Transverse colon (tissue), 4 donors: ENCODE measurements at regions of chr20 and their contacts with region 1.

Region 1: GRCh38 chr20:38221119-38221589 is 39.4 kb downstream of the KIAA1755 start:
- DNase-seq: peak; percentile 61
- H3K4me3 ChIP-seq: no peak overlapping the region
- H3K27ac ChIP-seq: no peak overlapping the region
- H3K4me1 ChIP-seq: no peaks in the 10 kb centered on the region
- H3K27me3 ChIP-seq: no peaks in the 10 kb centered on the region
- CTCF ChIP-seq: peak; percentile 79 to 86 (median 85)
- EP300 ChIP-seq: no peak
- POLR2A ChIP-seq: no peak

Region 2: DNA sequence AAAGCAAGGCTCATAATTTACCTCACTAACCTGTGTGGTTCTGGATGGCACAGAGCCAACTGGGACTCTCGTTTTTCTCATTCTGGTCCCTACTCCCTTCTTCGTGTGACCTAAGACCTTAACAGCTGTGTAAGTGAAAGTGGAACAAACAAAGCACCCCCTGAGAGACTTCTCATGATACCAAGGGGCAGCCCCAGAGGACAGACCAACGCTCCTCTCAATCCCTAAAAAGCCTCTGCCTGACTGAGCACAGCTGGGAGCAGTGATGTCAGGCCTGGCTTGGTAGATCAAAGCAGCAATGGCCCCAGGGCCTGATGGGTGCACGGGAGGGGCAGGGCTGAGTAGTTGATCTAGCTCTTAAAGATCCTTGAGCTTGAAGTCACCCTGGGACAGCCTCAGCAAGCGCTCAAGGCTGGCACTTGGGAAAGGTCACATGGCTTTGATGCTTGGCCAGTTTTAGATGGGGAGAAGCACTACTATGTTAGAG is 39.9 kb before region 1 on chr20:
- in situ Hi-C with region 1: no loop called
- intact Hi-C with region 1: no loop called
- DNase-seq: no peak
- H3K4me3 ChIP-seq: no peak overlapping the region
- H3K27ac ChIP-seq: no peak overlapping the region
- H3K4me1 ChIP-seq: no peaks in the 10 kb centered on the region
- H3K27me3 ChIP-seq: peaks cover 15% of the 10 kb centered on the region
- CTCF ChIP-seq: no peak
- EP300 ChIP-seq: no peak
- POLR2A ChIP-seq: no peak

Region 3: DNA sequence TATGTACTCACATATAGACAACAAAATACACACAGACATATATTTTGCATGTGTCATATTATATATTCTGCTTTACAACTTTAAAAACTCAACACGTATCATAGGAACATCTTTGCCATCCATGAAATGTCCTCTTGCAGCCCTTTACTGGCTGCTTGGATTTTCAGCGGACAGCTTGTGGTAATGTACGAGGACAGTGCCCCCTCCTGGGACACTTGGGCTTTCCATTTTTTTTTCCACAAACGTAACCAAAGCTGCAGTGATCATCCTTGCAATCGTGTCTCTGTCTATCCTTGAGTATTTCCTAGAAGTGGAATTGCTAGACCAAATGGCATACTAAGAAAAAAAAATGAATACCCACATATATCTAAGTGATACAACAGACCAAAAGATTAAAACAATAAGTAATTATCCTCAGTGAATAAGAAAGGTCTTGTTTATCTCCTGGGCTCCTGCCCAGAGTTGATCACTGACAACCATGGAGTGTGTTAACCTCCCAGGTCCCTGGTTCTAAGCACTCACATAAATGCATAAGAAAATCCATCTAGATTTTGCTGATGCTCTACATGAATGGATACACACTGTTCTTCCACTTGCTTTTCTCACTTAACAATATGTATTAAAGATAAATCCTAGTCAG is 100.9 kb after region 1 on chr20:
- in situ Hi-C with region 1: loop called in 1 of 4 experiments (anchors 10 kb)
- intact Hi-C with region 1: no loop called
- DNase-seq: no peak
- H3K4me3 ChIP-seq: no peak overlapping the region
- H3K27ac ChIP-seq: no peak overlapping the region
- H3K4me1 ChIP-seq: no peaks in the 10 kb centered on the region
- H3K27me3 ChIP-seq: peaks cover 9% of the 10 kb centered on the region
- CTCF ChIP-seq: peak; percentile 40 to 49 (median 42)
- EP300 ChIP-seq: no peak
- POLR2A ChIP-seq: no peak